RWPE1 (cell line): ENCODE measurements at regions of chr2 and their contacts with region 1.

Region 1: DNA sequence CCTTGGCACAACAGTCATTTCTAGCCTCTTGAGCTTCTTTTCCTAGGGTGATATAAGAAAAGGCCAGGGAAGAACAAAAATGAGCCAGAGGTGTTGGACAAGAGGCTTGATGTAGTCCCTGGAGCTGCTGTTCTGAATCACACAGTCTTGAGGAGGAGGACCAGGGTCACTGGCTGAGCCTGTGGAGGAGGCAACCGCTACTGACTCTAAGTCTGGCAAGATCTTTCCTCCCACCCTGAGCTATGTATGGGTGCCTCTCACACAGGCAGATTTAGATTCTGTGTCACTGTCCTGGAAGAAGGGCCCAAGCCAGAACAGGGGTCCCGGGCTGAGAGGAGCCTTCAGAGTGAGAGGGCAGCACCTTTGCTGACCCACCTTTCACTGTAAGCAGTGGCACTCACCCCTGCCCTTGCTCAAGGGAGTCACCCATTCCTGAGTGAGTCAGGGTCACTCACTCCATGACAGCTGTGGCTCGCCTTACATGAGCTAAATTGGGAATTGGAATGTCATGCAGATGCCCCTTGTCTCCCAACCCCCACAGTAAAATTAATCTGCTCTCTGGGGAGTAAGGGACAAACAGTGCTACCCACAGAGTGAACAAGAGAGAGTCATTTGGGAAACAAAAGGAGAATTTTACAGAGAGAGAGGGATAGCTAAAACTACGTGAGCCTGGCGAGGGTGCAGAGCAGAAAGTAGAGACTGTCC is at the start of gene TRIM54:
- DNase-seq: no peak
- H3K27ac ChIP-seq: no peak within 1 kb of the TSS
- CTCF ChIP-seq: no peak

Region 2: DNA sequence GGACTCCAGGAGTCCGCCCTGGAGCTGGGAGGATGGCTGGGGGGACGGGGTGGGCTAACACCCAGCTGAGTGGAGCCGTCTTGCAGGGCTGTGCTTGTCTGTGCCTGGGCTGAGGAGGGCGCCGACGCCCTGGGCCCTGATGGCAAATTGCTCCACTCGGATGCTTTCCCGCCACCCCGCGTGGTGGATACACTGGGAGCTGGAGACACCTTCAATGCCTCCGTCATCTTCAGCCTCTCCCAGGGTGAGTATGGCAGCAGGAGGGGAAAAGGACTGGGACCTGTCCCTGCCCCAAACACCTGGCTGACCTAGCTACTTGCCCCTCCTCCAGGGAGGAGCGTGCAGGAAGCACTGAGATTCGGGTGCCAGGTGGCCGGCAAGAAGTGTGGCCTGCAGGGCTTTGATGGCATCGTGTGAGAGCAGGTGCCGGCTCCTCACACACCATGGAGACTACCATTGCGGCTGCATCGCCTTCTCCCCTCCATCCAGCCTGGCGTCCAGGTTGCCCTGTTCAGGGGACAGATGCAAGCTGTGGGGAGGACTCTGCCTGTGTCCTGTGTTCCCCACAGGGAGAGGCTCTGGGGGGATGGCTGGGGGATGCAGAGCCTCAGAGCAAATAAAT is 182.6 kb before region 1 on chr2:
- CTCF ChIA-PET with region 1: interaction called, 13 read pairs
- POLR2A ChIA-PET with region 1: no interaction called
- DNase-seq: no peak
- H3K27ac ChIP-seq: no peak overlapping the region
- CTCF ChIP-seq: no peak

Region 3: GRCh38 chr2:27264753-27265535 is 17.1 kb before region 1 on chr2:
- CTCF ChIA-PET with region 1: interaction called, 32 read pairs
- POLR2A ChIA-PET with region 1: no interaction called
- DNase-seq: peak; percentile 64
- H3K27ac ChIP-seq: no peak overlapping the region
- CTCF ChIP-seq: peak; percentile 66

Region 4: DNA sequence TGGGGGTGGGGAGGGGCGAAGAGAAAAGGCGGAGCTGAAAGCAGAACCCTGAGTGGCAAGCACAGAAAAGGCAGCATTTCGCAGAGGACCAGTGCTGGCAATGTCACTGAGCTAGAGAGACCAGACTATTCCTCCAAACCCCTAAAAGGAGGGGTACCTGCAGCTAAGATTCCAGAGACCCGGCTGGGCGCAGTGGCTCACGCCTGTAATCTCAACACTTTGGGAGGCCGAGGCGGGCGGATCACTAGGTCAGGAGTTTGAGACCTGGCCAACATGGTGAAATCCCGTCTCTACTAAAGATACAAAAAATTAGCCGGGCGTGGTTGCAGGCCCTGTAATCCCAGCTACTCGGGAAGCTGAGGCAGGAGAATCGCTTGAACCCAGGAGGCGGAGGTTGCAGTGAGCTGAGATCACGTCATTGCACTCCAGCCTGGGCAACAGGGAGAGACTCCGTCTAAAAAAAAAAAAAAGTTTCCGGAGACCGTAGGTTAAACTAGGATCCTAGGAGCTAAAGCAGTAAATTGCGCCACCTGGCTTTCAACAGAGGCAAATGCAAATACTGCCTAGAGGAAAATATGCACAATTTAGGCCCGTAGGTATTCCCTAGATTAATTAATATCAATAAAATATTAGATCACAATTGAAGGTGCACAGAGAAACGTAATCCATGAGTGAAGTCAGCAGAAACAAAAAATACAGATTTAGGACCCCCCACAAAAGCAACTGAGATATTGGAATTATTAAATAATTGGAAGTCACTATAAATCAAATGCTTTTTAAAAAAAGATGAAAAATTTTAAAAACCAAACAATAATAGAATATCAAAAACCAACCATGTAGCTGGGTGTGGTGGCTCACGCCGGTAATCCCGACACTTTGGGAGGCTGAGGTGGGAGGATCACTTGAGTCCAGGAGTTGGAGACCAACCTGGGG is 21.4 kb after region 1 on chr2:
- CTCF ChIA-PET with region 1: interaction called, 36 read pairs
- POLR2A ChIA-PET with region 1: no interaction called
- DNase-seq: peak; percentile 72
- H3K27ac ChIP-seq: peak overlapping the region; percentile 31; the same call in 1 of the 2 replicates
- CTCF ChIP-seq: peak; percentile 89

Region 5: GRCh38 chr2:27322766-27323595 is 41.0 kb after region 1 on chr2 and contains the start of gene MPV17:
- CTCF ChIA-PET with region 1: no interaction called
- POLR2A ChIA-PET with region 1: no interaction called
- DNase-seq: peak; percentile 97
- H3K27ac ChIP-seq: peak within 1 kb of the TSS; percentile 85
- CTCF ChIP-seq: no peak